Activated CD4-positive, alpha-beta T cell treated with anti-CD3 and anti-CD28 coated beads for 36 hours (primary cell): ENCODE measurements at regions of chr6 and their contacts with region 1.

Region 1: GRCh38 chr6:30730601-30731435 is 10.7 kb downstream of the TUBB start:
- DNase-seq: peak; percentile 94
- ATAC-seq: peak; percentile 75
- H3K4me3 Mint-ChIP-seq: peak overlapping the region; percentile 51
- H3K27ac Mint-ChIP-seq: peak overlapping the region; percentile 65
- H3K4me1 Mint-ChIP-seq: peaks cover 44% of the 10 kb centered on the region
- H3K27me3 Mint-ChIP-seq: no peaks in the 10 kb centered on the region

Region 2: DNA sequence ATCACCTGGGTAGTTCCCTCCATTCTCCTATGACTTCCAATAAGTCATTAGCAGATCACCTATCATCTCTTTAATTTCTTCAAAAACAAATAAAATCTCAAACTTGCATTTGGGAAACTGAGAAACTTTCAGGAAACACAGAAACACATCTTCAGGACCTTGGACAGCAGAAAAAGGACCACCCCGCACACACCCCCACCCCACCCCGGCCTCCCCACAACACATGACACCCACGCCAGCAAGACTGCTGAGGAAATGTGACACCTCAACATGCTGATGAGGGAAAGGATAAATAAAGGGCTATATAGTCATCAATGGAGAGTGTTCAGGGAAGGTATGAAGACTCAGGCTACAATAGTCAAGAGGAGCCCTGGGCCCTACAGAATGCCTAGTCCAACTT is 419.7 kb before region 1 on chr6:
- CTCF ChIA-PET with region 1: no interaction called
- POLR2A ChIA-PET with region 1: no interaction called
- intact Hi-C with region 1: no loop called
- DNase-seq: no peak
- ATAC-seq: no peak
- H3K4me3 Mint-ChIP-seq: no peak overlapping the region
- H3K27ac Mint-ChIP-seq: no peak overlapping the region
- H3K4me1 Mint-ChIP-seq: peaks cover 29% of the 10 kb centered on the region
- H3K27me3 Mint-ChIP-seq: no peaks in the 10 kb centered on the region

Region 3: DNA sequence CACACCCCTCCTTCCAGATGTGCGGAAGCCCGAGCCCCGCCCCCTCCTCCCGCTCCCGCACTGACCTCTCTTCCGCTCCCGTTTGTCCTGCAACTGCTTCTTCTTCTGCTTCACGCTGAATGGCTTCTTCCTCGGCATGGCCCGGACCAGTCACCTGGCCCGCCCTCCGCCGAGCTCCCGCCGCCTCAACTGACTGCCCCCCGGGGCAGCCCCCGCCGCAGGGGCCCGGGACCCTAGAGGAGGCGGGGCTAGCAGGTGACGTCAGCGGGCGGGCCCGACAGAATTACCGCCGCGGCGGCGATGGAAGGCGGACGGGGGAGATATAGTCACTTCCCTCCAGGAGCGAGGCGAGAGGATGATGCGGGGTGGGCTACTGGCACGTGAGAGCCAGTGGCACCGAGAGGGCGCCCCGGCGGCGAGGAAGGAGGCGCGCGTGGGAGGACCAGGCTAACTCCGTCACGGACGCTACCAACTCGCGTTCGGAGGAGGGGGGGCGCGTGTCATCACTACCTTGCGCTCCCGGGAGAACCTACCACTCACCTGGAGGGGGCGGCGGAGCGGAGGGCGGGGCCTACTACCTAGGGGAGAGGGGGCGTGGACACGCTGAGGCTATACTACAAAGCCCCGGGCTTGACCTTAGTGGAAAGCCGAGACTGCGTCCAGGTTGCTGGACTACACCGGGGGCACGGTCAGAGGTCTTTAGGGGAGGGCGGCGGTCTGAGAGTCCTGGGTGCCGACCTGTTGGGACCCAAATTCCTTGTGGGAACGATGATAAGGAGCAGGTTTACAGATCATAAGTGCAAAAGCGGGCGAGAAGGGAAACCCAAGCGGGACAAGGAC is 174.5 kb before region 1 on chr6 and contains the start of gene GNL1:
- CTCF ChIA-PET with region 1: no interaction called
- POLR2A ChIA-PET with region 1: no interaction called
- intact Hi-C with region 1: no loop called
- DNase-seq: peak; percentile 100
- ATAC-seq: peak; percentile 89
- H3K4me3 Mint-ChIP-seq: peak within 1 kb of the TSS; percentile 97
- H3K27ac Mint-ChIP-seq: peak within 1 kb of the TSS; percentile 100
- H3K4me1 Mint-ChIP-seq: peaks cover 34% of the 10 kb centered on the region
- H3K27me3 Mint-ChIP-seq: no peaks in the 10 kb centered on the region
- total RNA-seq, gene GNL1: 91.3 to 104 TPM

Region 4: DNA sequence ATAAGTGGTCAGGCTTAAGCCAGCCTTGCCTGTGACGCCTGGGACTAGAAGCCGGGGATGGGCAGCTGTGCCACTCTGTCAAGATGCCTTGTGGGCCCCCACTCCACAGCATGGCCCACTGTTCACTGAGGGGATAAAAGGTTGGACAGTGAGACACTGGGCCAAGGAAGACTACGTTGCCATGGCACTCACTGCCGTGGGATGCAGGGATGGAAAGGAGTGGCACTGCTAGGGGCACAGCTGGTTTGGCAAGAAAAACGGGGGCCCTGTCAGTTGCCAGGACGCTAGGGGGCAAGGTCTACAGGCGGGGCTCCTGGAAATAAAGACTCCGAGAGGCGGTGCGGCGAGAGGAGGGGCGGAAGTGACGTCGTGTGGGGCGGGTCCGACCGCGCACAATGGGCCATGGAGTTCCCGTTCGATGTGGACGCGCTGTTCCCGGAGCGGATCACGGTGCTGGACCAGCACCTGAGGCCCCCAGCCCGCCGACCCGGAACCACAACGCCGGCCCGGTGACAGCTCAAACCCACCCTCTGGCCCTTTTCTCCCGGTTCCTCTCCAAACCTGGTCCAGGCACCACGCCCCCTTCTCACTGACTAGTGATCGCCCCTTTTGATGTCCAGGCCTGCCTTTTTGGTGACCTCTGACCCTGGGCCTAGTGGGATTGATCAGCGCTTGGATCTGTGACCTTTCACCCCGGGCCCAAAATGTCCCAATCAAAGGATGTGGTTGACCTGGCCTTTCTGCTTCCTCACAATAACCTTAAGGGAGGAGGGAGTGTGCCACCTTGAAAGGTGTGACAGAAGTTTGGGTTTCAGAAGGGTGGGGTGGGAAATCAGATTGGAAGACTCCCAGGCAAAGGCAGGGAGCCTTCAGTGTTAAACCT is 104.1 kb before region 1 on chr6 and contains the start of gene ATAT1:
- CTCF ChIA-PET with region 1: interaction called, 3 read pairs
- POLR2A ChIA-PET with region 1: no interaction called
- intact Hi-C with region 1: loop called in 1 of 2 experiments (anchors 2 kb)
- DNase-seq: peak; percentile 91
- ATAC-seq: peak; percentile 98
- H3K4me3 Mint-ChIP-seq: peak within 1 kb of the TSS; percentile 93
- H3K27ac Mint-ChIP-seq: peak within 1 kb of the TSS; percentile 96
- H3K4me1 Mint-ChIP-seq: peaks cover 21% of the 10 kb centered on the region
- H3K27me3 Mint-ChIP-seq: no peaks in the 10 kb centered on the region
- total RNA-seq, gene ATAT1: 7.1 to 9.2 TPM

Region 5: GRCh38 chr6:30678964-30679726 is 51.7 kb before region 1 on chr6:
- CTCF ChIA-PET with region 1: interaction called, 59 read pairs
- POLR2A ChIA-PET with region 1: interaction called, 7 read pairs
- intact Hi-C with region 1: loop called in 1 of 2 experiments (anchors 1 kb)
- DNase-seq: peak; percentile 96
- ATAC-seq: peak; percentile 37
- H3K4me3 Mint-ChIP-seq: peak overlapping the region; percentile 100
- H3K27ac Mint-ChIP-seq: peak overlapping the region; percentile 97
- H3K4me1 Mint-ChIP-seq: peaks cover 23% of the 10 kb centered on the region
- H3K27me3 Mint-ChIP-seq: no peaks in the 10 kb centered on the region

Region 6: GRCh38 chr6:30742316-30743098 is 11.7 kb after region 1 on chr6 and contains the start of gene FLOT1:
- CTCF ChIA-PET with region 1: interaction called, 6 read pairs
- POLR2A ChIA-PET with region 1: interaction called, 9 read pairs
- intact Hi-C with region 1: loop called in 1 of 2 experiments (anchors 1 kb)
- DNase-seq: peak; percentile 98
- ATAC-seq: peak; percentile 74
- H3K4me3 Mint-ChIP-seq: peak within 1 kb of the TSS; percentile 96
- H3K27ac Mint-ChIP-seq: peak within 1 kb of the TSS; percentile 95
- H3K4me1 Mint-ChIP-seq: peaks cover 67% of the 10 kb centered on the region
- H3K27me3 Mint-ChIP-seq: no peaks in the 10 kb centered on the region
- total RNA-seq, gene FLOT1: 155 to 188 TPM

Region 7: GRCh38 chr6:30821862-30822782 is 91.3 kb after region 1 on chr6:
- CTCF ChIA-PET with region 1: interaction called, 46 read pairs
- POLR2A ChIA-PET with region 1: interaction called, 8 read pairs
- intact Hi-C with region 1: no loop called
- DNase-seq: no peak
- ATAC-seq: no peak
- H3K4me3 Mint-ChIP-seq: no peak overlapping the region
- H3K27ac Mint-ChIP-seq: peak overlapping the region; percentile 70
- H3K4me1 Mint-ChIP-seq: peaks cover 74% of the 10 kb centered on the region
- H3K27me3 Mint-ChIP-seq: no peaks in the 10 kb centered on the region

Region 8: GRCh38 chr6:31087494-31088089 is 356.8 kb after region 1 on chr6:
- CTCF ChIA-PET with region 1: interaction called, 7 read pairs
- POLR2A ChIA-PET with region 1: no interaction called
- intact Hi-C with region 1: loop called (anchors 5 to 10 kb)
- DNase-seq: peak; percentile 94
- ATAC-seq: peak; percentile 96
- H3K4me3 Mint-ChIP-seq: no peak overlapping the region
- H3K27ac Mint-ChIP-seq: no peak overlapping the region
- H3K4me1 Mint-ChIP-seq: peaks cover 13% of the 10 kb centered on the region
- H3K27me3 Mint-ChIP-seq: no peaks in the 10 kb centered on the region

Region 9: DNA sequence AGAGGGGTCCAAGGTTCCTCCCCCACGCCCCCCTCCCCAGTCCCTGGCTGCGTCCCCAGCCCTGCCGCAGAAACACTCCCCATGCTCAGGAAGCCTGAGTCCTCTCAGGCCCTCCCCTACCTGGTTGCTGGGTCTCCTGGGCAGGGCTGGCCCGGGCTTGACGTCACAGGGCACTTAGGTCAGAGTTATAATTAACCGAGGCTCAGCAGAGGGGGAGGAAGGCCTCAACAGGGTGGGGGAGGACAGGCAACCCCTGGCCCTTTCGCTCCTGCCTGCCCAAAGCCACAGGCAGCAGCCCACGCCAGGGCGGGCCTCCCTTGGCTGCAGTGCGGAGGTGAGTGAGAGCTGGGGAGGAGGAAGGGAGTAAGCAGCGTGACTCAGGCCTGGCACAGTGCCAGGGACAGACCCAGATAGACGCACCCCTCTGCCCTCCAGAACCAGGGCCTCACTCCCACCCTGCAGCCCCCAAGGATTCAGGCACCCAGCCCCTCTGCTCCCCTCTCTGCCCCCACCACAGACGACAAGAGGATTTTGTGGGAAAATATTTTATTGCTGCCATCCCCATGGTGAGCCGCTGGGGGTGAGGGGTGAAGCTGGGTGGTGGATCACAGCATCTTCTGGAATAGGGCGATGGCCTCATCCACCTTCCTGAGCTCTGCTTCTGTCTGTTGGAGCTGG is 1046.3 kb after region 1 on chr6 and contains the start of gene VWA7:
- CTCF ChIA-PET with region 1: no interaction called
- POLR2A ChIA-PET with region 1: no interaction called
- intact Hi-C with region 1: no loop called
- DNase-seq: peak; percentile 90
- ATAC-seq: peak; percentile 93
- H3K4me3 Mint-ChIP-seq: no peak within 1 kb of the TSS
- H3K27ac Mint-ChIP-seq: peak within 1 kb of the TSS; percentile 47
- H3K4me1 Mint-ChIP-seq: peaks cover 36% of the 10 kb centered on the region
- H3K27me3 Mint-ChIP-seq: no peaks in the 10 kb centered on the region
- total RNA-seq, gene VWA7: 1.4 to 1.5 TPM